MCF 10A (cell line): ENCODE measurements at regions of chr12 and their contacts with region 1.

Region 1: GRCh38 chr12:110245369-110245772 is 35.7 kb upstream of the ATP2A2 start:
- DNase-seq: peak; percentile 54
- H3K4me3 Mint-ChIP-seq: no peak overlapping the region
- H3K27ac Mint-ChIP-seq: no peak overlapping the region
- H3K4me1 Mint-ChIP-seq: peaks cover 15% of the 10 kb centered on the region
- H3K27me3 Mint-ChIP-seq: no peaks in the 10 kb centered on the region
- CTCF ChIP-seq: peak; percentile 28

Region 2: GRCh38 chr12:110270125-110270962 is 25.0 kb after region 1 on chr12:
- CTCF ChIA-PET with region 1: interaction called, 3 read pairs
- POLR2A ChIA-PET with region 1: interaction called, 54 read pairs
- intact Hi-C with region 1: no loop called
- DNase-seq: peak; percentile 86
- H3K4me3 Mint-ChIP-seq: peak overlapping the region; percentile 60
- H3K27ac Mint-ChIP-seq: peak overlapping the region; percentile 68
- H3K4me1 Mint-ChIP-seq: peaks cover 30% of the 10 kb centered on the region
- H3K27me3 Mint-ChIP-seq: no peaks in the 10 kb centered on the region
- CTCF ChIP-seq: no peak